Activated T-helper 1 cell treated with anti-CD3 and anti-CD28 coated beads, Interleukin-12 subunit alpha, Interleukin-12 subunit beta, Interleukin-2, Interleukin-4 antibody, amounts not matched to agents 30 ng/mL and 10 ng/mL and 1 ng/mL, durations not matched to agents 14 hours and 24 hours and 36 hours (primary cell): ENCODE measurements at regions of chr9 and their contacts with region 1.

Region 1: GRCh38 chr9:35829084-35829763 is at the start of gene TMEM8B:
- DNase-seq: peak; percentile 86
- H3K4me3 Mint-ChIP-seq: peak within 1 kb of the TSS; percentile 91
- H3K27ac Mint-ChIP-seq: peak within 1 kb of the TSS; percentile 89
- H3K4me1 Mint-ChIP-seq: peaks cover 22% of the 10 kb centered on the region
- H3K27me3 Mint-ChIP-seq: peaks cover 3% of the 10 kb centered on the region
- total RNA-seq, gene TMEM8B: 1.7 and 1.9 TPM in 2 replicates

Region 2: DNA sequence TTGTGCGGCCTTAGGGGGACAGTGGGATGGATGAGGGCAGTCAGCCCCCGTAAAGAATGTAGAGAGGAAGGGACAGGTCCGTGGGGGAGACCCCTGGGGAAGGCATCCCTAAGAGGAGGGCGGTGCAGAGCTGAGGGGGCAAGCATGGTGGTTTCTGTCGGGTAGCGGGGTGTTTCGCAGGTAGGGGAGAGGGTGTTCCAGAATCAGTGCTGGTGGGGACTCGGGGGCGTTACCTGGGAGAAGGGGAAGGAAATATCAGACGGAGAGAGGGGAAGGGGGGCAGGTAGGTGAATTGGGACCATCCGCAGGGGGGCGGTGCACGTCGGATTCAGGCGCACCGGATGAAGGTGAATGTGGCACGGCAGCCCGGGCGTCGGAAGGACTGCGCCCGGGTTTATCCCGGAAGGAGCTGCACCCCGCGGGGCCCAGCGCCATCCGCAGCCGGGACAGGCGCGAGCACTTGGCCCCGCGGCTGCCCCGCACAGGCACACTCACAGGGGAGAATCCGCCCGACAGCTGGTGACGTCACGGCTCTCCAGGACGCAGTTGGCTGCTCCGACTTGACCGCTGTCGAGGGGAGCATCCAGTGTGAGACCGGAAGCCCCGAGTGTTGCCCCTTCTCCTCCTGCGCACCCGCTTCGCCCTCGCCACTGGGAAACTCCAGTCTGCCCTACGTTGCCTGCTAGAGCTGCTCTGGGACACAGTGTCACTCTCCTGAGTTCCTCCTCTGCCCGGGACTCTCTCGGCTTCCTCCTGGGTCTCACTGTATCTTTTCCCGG is 212.4 kb before region 1 on chr9:
- intact Hi-C with region 1: loop called (anchors 5 kb)
- DNase-seq: peak; percentile 57
- H3K4me3 Mint-ChIP-seq: peak overlapping the region; percentile 69
- H3K27ac Mint-ChIP-seq: peak overlapping the region; percentile 92
- H3K4me1 Mint-ChIP-seq: peaks cover 65% of the 10 kb centered on the region
- H3K27me3 Mint-ChIP-seq: peaks cover 2% of the 10 kb centered on the region

Region 3: DNA sequence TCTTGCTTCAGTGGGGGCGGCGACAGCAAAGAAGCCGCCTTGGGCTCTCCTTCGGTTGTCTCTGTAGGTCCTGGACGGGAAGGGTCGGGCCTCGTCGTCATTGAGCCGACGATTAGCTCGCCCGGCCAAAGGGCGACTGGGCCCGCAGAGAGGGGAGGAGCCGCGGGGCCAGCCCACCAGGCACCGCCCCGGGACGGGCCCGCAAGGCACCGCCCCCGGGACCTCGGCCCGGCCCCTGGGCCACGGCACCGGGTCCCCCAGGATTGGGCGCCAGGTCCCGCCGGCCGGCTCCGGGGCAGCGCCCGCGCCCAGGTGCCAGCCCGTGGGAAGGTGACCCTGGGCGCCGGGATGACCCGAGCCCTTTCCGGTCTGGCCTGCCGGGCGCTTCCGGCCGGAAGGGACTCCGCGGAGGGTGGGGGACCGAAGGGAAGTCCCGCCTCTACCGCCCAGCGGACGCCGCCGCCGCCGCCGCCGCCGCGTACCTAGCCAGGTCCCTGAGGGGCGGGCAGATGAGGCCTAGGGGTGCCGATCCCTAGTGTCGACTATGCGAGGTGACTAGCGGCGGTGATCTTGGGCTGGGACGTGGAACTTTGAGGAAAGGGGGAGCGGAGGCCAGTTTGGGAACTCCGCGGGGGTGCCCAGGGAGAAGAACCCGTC is 80.2 kb before region 1 on chr9 and contains the starts of genes GBA2 and RGP1:
- intact Hi-C with region 1: loop called (anchors 2 kb)
- DNase-seq: peak; percentile 69
- H3K4me3 Mint-ChIP-seq: peak within 1 kb of the TSS; percentile 95
- H3K27ac Mint-ChIP-seq: peak within 1 kb of the TSS; percentile 73
- H3K4me1 Mint-ChIP-seq: peaks cover 40% of the 10 kb centered on the region
- H3K27me3 Mint-ChIP-seq: no peaks in the 10 kb centered on the region
- total RNA-seq, gene GBA2: 54.7 and 58.4 TPM in 2 replicates
- total RNA-seq, gene RGP1: 18.4 and 18.9 TPM in 2 replicates

Region 4: DNA sequence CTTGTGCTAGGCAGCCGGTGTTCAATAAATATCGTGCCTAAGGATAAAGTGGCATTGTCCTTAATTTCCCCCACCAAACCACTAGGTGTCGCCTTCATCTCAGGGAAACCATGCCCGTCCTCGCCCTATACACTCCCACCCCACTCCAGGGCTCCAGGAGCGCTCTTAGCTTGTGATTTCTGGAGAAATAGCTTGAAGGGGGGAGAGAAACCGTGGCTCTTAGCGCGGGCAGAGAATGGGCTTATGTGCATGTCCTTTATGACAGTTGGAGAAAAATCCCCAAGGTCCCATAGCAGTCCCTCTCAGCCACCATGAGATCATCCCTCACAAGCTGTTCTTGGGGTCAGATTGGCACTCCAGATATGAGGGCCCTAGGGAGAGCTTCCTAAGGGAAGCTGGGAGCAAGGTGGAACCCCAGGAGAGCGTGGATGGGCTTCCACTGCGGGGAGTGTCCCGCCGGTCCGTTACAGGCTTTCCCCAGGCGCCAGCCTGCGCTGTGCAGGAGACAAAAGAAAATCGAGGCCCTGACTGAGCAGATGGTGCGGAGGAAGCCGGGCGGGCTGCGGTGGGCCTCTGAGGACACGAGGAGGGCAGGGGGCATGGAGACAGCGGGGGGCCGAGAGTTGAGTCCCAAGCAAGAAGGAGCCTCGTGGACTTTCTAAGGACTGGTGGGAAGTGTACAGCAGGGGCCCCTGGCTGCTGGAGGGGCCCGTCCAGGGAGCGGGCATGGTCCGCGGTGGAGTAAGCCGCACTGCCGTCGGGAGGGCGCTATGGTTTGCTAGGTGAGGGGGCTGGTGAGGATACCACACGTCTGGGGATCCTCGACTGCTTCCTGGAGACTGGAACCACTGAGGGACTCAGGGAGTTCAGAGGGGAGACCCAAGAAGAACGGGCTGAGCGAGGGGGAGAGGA is 38.6 kb before region 1 on chr9:
- intact Hi-C with region 1: loop called (anchors 1 kb)
- DNase-seq: peak; percentile 45
- H3K4me3 Mint-ChIP-seq: no peak overlapping the region
- H3K27ac Mint-ChIP-seq: no peak overlapping the region
- H3K4me1 Mint-ChIP-seq: peaks cover 10% of the 10 kb centered on the region
- H3K27me3 Mint-ChIP-seq: no peaks in the 10 kb centered on the region

Region 5: DNA sequence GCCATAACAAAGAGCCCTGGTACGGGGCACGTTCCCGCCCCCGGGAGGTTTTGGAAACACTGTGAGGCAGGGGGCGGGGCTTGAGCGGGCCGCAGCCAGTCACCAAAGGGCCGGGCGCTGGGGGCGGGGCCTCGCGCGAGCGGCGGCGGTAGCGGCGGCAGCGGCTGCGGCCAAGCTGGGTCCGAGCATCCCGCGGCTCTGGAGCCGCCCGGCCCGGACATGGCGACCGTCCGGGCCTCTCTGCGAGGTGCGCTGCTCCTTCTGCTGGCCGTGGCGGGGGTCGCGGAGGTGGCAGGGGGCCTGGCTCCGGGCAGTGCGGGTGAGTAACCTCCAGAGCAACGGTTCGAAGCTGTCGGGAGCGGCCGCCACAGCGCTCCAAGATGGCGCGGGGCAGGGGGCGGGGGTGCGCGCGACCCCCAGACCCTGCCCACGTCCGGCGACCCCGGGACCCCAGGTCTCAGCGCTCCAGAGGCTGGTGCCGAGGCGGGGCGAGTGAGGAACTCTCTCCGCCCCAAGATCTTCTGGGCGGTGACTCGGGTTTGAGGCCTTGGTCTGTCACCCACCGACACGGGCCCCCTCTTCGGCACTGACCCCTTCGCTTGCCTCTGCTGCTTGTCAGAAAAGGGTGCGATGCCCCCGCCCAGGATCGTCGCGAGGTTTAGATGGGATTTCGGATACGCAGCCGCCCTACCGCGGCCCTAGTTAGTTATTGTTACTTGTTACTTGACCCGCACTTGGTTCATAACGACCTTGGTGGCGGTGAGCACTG is 207.7 kb after region 1 on chr9 and contains the start of gene RECK:
- intact Hi-C with region 1: loop called (anchors 10 kb)
- DNase-seq: peak; percentile 84
- H3K4me3 Mint-ChIP-seq: peak within 1 kb of the TSS; percentile 90
- H3K27ac Mint-ChIP-seq: peak within 1 kb of the TSS; percentile 80
- H3K4me1 Mint-ChIP-seq: peaks cover 34% of the 10 kb centered on the region
- H3K27me3 Mint-ChIP-seq: peaks cover 24% of the 10 kb centered on the region
- total RNA-seq, gene RECK: 3.8 and 4.4 TPM in 2 replicates

Region 6: GRCh38 chr9:36487482-36488388 is 658.5 kb after region 1 on chr9:
- intact Hi-C with region 1: loop called (anchors 2 kb)
- DNase-seq: peak; percentile 91
- H3K4me3 Mint-ChIP-seq: peak overlapping the region; percentile 87
- H3K27ac Mint-ChIP-seq: peak overlapping the region; percentile 87
- H3K4me1 Mint-ChIP-seq: peaks cover 53% of the 10 kb centered on the region
- H3K27me3 Mint-ChIP-seq: no peaks in the 10 kb centered on the region